Naive thymus-derived CD4-positive, alpha-beta T cell (primary cell): ENCODE measurements at regions of chrX and their contacts with region 1.

Region 1: GRCh38 chrX:10098270-10098713 is 58.5 kb upstream of the CLCN4 start:
- DNase-seq: peak in 8 of 9 donors; percentile 30 to 78 (median 64)
- ATAC-seq: peak; percentile 87
- H3K4me3 ChIP-seq: peak overlapping the region; percentile 72
- H3K4me3 Mint-ChIP-seq: peak overlapping the region; percentile 83 to 94 (median 88)
- H3K27ac ChIP-seq: peak overlapping the region; percentile 73
- H3K27ac Mint-ChIP-seq: peak overlapping the region; percentile 86 to 98 (median 92)
- H3K4me1 ChIP-seq: peaks cover 5 to 9% of the 10 kb centered on the region in 2 donors
- H3K4me1 Mint-ChIP-seq: peaks cover 13 to 58% (median 51%) of the 10 kb centered on the region in 7 donors
- H3K27me3 ChIP-seq: no peaks in the 10 kb centered on the region
- H3K27me3 Mint-ChIP-seq: no peaks in the 10 kb centered on the region

Region 2: GRCh38 chrX:9456250-9457074 is 641.8 kb before region 1 on chrX:
- CTCF ChIA-PET with region 1: no interaction called
- POLR2A ChIA-PET with region 1: no interaction called
- intact Hi-C with region 1: loop called in 1 of 2 experiments (anchors 2 kb)
- DNase-seq: peak in 8 of 9 donors; percentile 8 to 87 (median 81)
- ATAC-seq: peak; percentile 96
- H3K4me3 ChIP-seq: peak overlapping the region; percentile 11
- H3K4me3 Mint-ChIP-seq: peak overlapping the region; percentile 36 to 79 (median 64)
- H3K27ac ChIP-seq: peak overlapping the region; percentile 88
- H3K27ac Mint-ChIP-seq: peak overlapping the region; percentile 77 to 99 (median 96)
- H3K4me1 ChIP-seq: peaks cover 9 to 20% of the 10 kb centered on the region in 2 donors
- H3K4me1 Mint-ChIP-seq: peaks cover 5 to 47% (median 33%) of the 10 kb centered on the region in 7 donors
- H3K27me3 ChIP-seq: no peaks in the 10 kb centered on the region
- H3K27me3 Mint-ChIP-seq: no peaks in the 10 kb centered on the region

Region 3: DNA sequence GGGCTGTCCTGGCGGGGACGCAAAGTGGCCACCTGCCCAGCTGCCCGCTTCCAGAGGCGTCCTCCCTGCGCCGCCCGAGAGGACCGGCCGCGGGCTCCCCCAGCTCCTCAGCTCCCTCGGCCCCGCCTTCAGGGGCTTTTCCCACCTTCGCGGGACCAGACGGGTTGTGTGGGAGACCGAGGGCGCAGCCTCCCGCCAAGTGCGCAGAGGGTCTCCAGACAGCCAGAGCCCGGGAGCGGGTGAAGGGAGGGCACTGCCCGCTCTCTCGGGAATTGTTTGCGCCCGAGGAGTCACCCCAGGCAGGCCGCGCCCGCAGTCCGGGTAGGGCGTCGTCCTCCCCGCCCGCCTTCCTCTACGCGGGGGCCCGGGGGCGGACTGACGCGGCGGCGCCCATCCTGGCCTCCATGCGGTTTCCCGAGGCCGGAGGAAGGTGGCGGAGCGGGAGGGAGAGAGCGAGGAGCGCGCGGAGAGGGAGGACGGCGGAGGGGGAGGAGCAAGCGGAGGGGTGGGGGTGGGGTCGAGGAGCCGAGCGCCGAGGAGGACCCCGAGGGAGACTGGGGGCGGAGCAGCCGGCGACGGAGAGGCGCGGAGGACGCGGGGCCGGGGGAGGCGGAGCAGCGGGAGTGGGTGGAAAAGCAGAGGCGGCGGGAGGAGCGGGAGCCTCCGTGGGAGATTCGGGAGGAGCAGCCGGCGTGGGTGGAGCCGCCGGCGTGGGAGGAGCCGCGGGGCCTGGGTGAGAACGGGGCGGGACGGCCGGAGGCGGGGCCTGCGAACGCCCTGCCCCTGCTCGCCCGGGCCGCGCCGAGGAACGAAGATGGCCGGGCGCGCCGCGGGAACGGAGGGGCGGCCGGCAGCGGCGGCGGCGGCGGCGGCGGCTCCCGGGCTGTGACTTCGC is 83.6 kb before region 1 on chrX:
- CTCF ChIA-PET with region 1: no interaction called
- POLR2A ChIA-PET with region 1: interaction called, 3 read pairs
- intact Hi-C with region 1: loop called (anchors 1 kb)
- DNase-seq: peak; percentile 62 to 84 (median 78)
- ATAC-seq: peak; percentile 97
- H3K4me3 ChIP-seq: peak overlapping the region; percentile 37
- H3K4me3 Mint-ChIP-seq: peak overlapping the region; percentile 50 to 89 (median 64)
- H3K27ac ChIP-seq: peak overlapping the region; percentile 64
- H3K27ac Mint-ChIP-seq: peak overlapping the region in 4 of 9 donors; percentile 45 to 75 (median 58)
- H3K4me1 ChIP-seq: peaks cover 7 to 13% of the 10 kb centered on the region in 2 donors
- H3K4me1 Mint-ChIP-seq: peaks cover 17 to 51% (median 43%) of the 10 kb centered on the region in 7 donors
- H3K27me3 ChIP-seq: no peaks in the 10 kb centered on the region
- H3K27me3 Mint-ChIP-seq: peaks cover 0 to 4% (median 0%) of the 10 kb centered on the region in 5 donors

Region 4: DNA sequence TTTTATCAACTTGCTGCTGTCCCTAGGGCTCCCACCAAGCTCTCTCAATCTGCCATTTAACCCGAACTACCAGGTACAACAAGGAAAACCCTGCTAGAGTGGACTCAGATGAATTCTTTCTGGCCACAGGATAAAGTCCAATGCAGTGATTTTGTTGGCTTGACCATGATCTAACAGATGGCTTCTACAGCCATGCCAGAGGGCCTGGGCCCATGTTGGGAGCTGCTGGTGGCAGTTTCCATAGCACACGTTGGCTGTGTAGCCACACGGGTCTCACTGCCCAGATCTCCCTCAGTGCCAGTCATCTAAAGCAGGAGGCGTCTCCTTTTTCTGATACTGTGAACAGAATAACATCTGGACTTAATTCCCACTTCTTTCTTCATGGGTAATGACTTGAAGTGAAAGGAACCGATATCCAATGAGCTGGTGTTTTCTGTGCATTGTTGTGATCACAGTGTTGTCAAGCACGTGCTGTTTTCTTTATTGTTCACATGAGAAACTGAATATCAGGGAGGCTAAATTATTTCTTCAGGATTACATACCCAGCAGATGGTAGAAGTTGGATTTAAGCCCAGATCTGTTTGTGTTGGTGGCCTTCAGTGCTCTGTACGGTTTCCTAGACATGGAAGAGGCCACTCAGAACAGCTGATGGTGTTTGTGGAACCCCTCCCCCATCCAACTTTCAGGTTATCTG is 26.7 kb before region 1 on chrX:
- CTCF ChIA-PET with region 1: interaction called, 4 read pairs
- POLR2A ChIA-PET with region 1: interaction called, 10 read pairs
- intact Hi-C with region 1: no loop called
- DNase-seq: no peak
- ATAC-seq: no peak
- H3K4me3 ChIP-seq: no peak overlapping the region
- H3K4me3 Mint-ChIP-seq: peak overlapping the region in 4 of 10 donors; percentile 41 to 55 (median 48)
- H3K27ac ChIP-seq: no peak overlapping the region
- H3K27ac Mint-ChIP-seq: peak overlapping the region in 5 of 9 donors; percentile 31 to 67 (median 54)
- H3K4me1 ChIP-seq: peaks cover 0 to 17% of the 10 kb centered on the region in 2 donors
- H3K4me1 Mint-ChIP-seq: peaks cover 4 to 23% (median 16%) of the 10 kb centered on the region in 7 donors
- H3K27me3 ChIP-seq: no peaks in the 10 kb centered on the region
- H3K27me3 Mint-ChIP-seq: no peaks in the 10 kb centered on the region